T-cell (primary cell): ENCODE measurements at regions of chr11 and their contacts with region 1.

Region 1: GRCh38 chr11:22730319-22730718 is 63.9 kb downstream of the GAS2 start:
- DNase-seq: peak in 3 of 35 experiments; percentile 3 to 49 (median 7)
- ATAC-seq: peak in 1 of 4 experiments; percentile 43
- H3K4me3 ChIP-seq: no peak overlapping the region
- H3K4me3 Mint-ChIP-seq: no peak overlapping the region
- H3K27ac ChIP-seq: no peak overlapping the region
- H3K27ac Mint-ChIP-seq: no peak overlapping the region
- H3K4me1 ChIP-seq: no peaks in the 10 kb centered on the region
- H3K4me1 Mint-ChIP-seq: no peaks in the 10 kb centered on the region
- H3K27me3 ChIP-seq: no peaks in the 10 kb centered on the region
- H3K27me3 Mint-ChIP-seq: peaks cover 0 to 4% of the 10 kb centered on the region in 2 donors

Region 2: GRCh38 chr11:22703040-22703439 is 27.3 kb before region 1 on chr11:
- CTCF ChIA-PET with region 1: no interaction called
- POLR2A ChIA-PET with region 1: no interaction called
- DNase-seq: no peak
- ATAC-seq: peak in 1 of 4 experiments; percentile 42
- H3K4me3 ChIP-seq: no peak overlapping the region
- H3K4me3 Mint-ChIP-seq: no peak overlapping the region
- H3K27ac ChIP-seq: no peak overlapping the region
- H3K27ac Mint-ChIP-seq: no peak overlapping the region
- H3K4me1 ChIP-seq: no peaks in the 10 kb centered on the region
- H3K4me1 Mint-ChIP-seq: peaks cover 0 to 8% (median 4%) of the 10 kb centered on the region in 3 donors
- H3K27me3 ChIP-seq: peaks cover 0 to 2% of the 10 kb centered on the region in 2 experiments
- H3K27me3 Mint-ChIP-seq: no peaks in the 10 kb centered on the region

Region 3: DNA sequence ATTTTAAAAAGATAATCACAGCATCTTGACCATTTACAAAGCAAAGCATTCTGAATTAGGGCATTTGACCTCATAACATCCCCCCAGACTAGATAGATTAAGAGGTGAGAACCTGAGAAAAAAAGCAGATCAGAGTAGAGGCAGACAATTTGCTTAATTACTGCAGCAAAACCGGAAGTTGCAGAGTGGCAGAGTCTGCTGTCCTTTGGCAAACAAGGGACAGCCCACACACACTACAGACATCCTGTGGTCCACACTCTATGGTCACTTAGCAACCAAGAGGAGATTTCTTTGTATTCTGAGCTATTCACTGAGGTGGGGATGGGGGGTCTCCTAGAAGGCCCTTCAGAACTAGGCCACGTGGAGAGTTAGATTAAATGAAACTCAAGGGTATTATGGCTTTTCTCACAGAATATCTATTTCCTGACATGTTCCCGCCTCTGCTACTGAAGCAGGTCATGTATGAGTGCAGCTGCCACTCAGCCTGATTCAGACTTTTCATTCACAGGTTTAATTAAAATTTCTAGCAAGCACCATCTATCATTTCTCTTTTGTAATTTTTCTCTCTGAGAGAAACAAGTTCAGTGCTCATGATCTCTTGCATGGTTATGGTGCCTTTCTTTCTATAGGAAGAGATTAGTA is 50.8 kb after region 1 on chr11:
- CTCF ChIA-PET with region 1: no interaction called
- POLR2A ChIA-PET with region 1: interaction called in 1 of 2 experiments, 10 read pairs
- DNase-seq: peak in 2 of 35 experiments; percentile 0 to 4
- ATAC-seq: no peak
- H3K4me3 ChIP-seq: no peak overlapping the region
- H3K4me3 Mint-ChIP-seq: no peak overlapping the region
- H3K27ac ChIP-seq: no peak overlapping the region
- H3K27ac Mint-ChIP-seq: peak overlapping the region in 1 of 2 donors; percentile 17
- H3K4me1 ChIP-seq: no peaks in the 10 kb centered on the region
- H3K4me1 Mint-ChIP-seq: peaks cover 7 to 8% (median 8%) of the 10 kb centered on the region in 3 donors
- H3K27me3 ChIP-seq: no peaks in the 10 kb centered on the region
- H3K27me3 Mint-ChIP-seq: peaks cover 0 to 6% of the 10 kb centered on the region in 2 donors